Activated B cell treated with CpG ODN at 0.5 μM for 24 hours (primary cell): ENCODE measurements at regions of chr21 and their contacts with region 1.

Region 1: DNA sequence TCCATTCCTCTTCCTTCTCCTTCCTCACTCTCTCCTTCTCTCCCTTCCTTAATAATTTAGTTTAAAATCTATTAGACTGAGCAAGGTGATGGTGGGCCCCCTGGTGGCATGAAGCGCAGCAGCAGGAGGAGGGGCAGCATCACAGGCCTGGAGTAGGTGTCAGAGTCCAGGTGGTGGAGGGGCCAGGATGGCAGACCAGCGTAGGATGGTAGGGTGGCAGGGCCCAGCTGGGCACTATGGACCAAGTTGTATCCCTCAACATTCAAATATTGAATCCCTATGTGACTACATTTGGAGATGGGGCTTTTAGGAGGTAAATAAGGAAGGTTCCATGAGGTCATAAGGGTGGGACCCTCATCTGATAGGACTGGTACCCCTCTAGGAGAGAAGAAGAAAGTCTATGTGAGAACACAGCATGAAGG is 61.0 kb downstream of the WDR4 start:
- DNase-seq: no peak
- ATAC-seq: peak; percentile 70
- H3K4me3 Mint-ChIP-seq: no peak overlapping the region
- H3K27ac Mint-ChIP-seq: no peak overlapping the region
- H3K4me1 Mint-ChIP-seq: no peaks in the 10 kb centered on the region
- H3K27me3 Mint-ChIP-seq: peaks cover 6% of the 10 kb centered on the region
- CTCF ChIP-seq: peak; percentile 78

Region 2: DNA sequence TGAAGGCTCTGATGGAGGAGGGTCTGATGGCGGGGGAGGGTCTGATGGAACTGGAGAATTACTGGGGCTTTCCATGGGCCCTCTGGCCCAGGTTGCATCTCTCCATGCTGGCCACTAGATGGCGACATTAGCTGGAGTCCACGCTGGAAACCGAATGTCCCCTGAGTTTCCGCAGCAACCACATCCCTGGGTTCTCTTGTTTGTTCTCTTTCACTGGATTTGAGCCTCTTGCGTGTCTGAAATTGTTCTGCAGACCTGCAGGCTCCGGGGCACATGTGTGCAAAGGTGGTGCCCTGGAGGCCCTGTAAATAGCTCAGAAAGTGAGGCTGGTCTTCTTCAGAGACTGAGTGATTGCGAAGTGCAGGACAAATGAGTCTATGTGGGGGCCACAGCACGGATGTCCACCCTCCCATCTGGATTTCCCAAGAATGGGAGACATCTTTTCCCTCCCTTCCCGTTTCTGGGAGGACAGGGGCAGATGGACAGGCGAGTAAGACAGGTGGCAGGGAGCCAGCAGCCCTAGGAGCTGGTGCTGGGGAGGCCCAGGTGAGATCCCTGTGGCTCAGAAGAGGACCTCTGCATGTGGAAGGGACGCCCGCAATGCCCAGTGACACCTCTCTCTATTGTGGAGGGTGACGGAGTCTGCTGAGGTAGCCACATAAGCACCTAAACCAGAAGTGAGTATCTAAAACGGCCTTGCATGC is 672.6 kb before region 1 on chr21:
- CTCF ChIA-PET with region 1: no interaction called
- POLR2A ChIA-PET with region 1: no interaction called
- intact Hi-C with region 1: loop called (anchors 5 kb)
- DNase-seq: peak; percentile 36
- ATAC-seq: peak; percentile 86
- H3K4me3 Mint-ChIP-seq: no peak overlapping the region
- H3K27ac Mint-ChIP-seq: no peak overlapping the region
- H3K4me1 Mint-ChIP-seq: peaks cover 7% of the 10 kb centered on the region
- H3K27me3 Mint-ChIP-seq: no peaks in the 10 kb centered on the region
- CTCF ChIP-seq: no peak

Region 3: DNA sequence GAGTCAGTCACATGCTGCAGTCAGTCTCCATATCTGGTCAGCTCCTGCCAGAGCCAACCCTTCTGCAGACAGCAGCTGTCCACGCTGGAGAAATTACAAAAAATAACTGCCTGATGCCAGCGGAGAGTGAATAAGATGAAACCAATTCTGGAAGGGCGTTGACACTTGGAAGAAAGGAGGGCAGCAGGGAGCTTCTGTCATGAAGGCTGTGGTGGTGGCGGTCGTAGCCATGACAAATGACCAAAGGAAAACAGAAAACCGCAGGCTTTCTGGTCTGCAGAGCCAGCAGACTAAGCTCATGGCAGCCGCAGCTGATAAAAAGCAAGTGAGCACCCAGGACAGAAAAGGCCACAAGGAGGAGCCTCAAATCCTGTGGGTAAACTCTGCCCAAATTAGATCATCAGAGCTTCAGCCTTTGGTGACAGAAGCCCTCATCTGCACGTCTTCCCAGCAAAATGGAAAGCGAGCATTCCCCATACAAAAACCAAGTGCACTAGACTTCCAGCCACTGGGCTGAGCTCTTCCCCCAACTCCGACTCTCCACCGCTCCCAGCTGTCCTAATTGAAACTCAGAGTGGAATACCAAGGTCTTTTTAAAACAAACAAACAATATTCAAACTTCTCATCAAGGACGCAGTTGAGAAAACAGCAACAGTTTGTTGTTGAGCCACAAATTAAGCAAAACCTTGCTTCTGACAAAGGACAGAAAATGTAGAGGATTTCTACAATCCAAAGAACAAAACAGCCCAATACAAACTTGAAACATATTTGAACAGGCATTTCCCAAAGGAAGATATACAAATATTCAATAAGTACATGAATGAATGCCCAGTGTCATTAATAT is 351.0 kb before region 1 on chr21:
- CTCF ChIA-PET with region 1: no interaction called
- POLR2A ChIA-PET with region 1: no interaction called
- intact Hi-C with region 1: loop called (anchors 1 kb)
- DNase-seq: peak; percentile 13
- ATAC-seq: no peak
- H3K4me3 Mint-ChIP-seq: peak overlapping the region; percentile 6
- H3K27ac Mint-ChIP-seq: no peak overlapping the region
- H3K4me1 Mint-ChIP-seq: peaks cover 69% of the 10 kb centered on the region
- H3K27me3 Mint-ChIP-seq: peaks cover 3% of the 10 kb centered on the region
- CTCF ChIP-seq: no peak

Region 4: GRCh38 chr21:42641311-42642218 is 176.8 kb before region 1 on chr21:
- CTCF ChIA-PET with region 1: no interaction called
- POLR2A ChIA-PET with region 1: no interaction called
- intact Hi-C with region 1: no loop called
- DNase-seq: no peak
- ATAC-seq: no peak
- H3K4me3 Mint-ChIP-seq: no peak overlapping the region
- H3K27ac Mint-ChIP-seq: no peak overlapping the region
- H3K4me1 Mint-ChIP-seq: no peaks in the 10 kb centered on the region
- H3K27me3 Mint-ChIP-seq: peaks cover 8% of the 10 kb centered on the region
- CTCF ChIP-seq: no peak

Region 5: DNA sequence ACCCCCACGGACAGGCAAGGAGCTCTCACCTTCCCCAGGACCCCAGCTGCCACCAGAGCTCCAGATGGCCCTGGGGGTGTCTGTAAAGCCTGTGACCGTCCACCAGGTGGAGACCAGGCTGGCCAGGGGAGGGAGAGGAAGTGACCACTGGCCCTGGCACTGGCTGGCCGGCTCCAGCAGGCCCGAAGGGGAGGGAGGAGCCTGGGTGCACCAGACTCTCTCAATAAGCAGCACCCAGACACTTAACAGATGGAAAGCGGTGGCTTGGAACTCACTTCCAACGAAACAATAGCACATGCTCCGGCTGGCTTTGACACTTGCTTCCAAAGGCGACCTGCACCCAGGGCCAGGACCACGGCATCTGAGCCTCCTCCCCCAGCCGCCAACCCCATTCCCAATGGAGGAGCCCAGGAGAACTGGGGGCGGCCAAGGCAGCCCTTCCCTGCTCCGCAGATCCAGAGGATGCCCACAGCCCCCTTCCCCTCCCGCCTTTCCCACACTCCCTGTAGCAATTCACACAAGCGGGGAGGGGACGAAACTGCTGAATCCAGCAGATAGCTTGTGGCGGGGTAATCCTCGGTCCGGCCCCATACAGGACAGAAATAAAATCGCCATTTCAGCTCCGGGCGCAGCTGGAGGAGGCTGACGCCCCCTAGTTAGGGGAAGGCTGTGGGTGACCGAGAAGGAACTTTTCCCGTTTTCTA is 165.7 kb before region 1 on chr21:
- CTCF ChIA-PET with region 1: interaction called, 4 read pairs
- POLR2A ChIA-PET with region 1: no interaction called
- intact Hi-C with region 1: loop called (anchors 10 kb)
- DNase-seq: no peak
- ATAC-seq: no peak
- H3K4me3 Mint-ChIP-seq: peak overlapping the region; percentile 82
- H3K27ac Mint-ChIP-seq: no peak overlapping the region
- H3K4me1 Mint-ChIP-seq: peaks cover 21% of the 10 kb centered on the region
- H3K27me3 Mint-ChIP-seq: peaks cover 38% of the 10 kb centered on the region
- CTCF ChIP-seq: no peak

Region 6: DNA sequence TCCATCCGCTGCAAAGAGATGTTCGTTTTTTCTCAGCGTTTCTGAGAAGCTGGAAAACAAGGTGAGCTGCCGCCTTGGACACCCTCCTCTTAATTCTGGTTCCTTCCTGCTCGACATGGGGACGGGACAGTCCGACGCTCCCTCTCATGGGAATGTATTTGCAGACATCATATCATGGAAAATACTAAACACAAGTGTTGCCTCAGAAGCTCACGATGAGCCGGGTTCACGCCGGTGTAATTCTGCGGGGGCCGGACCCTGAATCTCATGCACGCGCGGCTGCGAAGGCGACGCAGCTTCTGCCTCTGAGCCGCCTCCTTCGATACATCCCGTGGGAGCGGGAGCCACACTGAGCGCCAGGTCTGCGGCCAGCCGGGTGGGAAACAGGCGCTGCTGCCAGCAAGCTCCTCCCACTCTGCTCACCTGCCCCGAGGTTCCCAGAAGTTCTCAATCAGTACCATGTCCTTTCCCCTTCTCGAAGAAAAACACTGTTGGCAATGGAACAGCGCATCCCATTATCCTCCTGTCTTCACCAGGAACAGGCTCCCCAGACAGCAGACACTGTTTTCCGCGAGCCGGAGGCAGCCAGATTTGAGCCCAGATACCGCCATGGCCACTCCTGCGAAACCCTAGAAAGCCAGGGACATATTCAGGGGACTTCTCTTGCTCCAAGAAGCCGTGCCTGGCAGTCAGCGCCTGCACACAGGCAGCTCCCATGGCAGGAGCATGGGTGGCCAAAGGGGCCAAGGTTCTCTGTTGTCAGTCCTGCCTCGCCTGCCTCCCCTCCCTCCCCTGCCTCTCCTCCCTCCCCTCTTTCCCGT is 37.0 kb before region 1 on chr21:
- CTCF ChIA-PET with region 1: no interaction called
- POLR2A ChIA-PET with region 1: no interaction called
- intact Hi-C with region 1: loop called (anchors 5 kb)
- DNase-seq: no peak
- ATAC-seq: no peak
- H3K4me3 Mint-ChIP-seq: no peak overlapping the region
- H3K27ac Mint-ChIP-seq: no peak overlapping the region
- H3K4me1 Mint-ChIP-seq: peaks cover 51% of the 10 kb centered on the region
- H3K27me3 Mint-ChIP-seq: peaks cover 21% of the 10 kb centered on the region
- CTCF ChIP-seq: no peak